ENCODE measurements at regions of chr2 and their contacts with region 1.

Region 1: DNA sequence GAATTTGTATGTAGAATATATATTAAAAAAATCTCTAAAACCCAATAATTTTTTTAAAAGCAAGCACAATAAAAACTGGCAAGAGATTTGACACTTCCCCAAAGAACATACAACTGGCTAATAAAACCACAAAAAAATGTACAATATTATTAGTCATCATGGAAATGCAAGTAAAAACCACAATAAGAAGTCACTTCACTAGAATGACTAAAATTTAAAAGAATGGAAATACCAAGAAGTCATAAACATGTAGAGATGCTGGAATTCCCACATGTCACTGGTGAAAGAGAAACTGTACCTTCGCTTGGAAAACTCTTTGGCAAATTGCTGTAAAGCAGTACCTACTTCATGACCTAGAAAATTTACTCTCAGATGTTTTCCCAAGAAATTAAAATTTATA is 43.4 kb upstream of the KYNU start:
- H3K4me3 Mint-ChIP-seq: peak overlapping the region; percentile 4
- H3K27ac Mint-ChIP-seq: peak overlapping the region; percentile 37
- H3K4me1 Mint-ChIP-seq: peaks cover 10% of the 10 kb centered on the region
- H3K27me3 Mint-ChIP-seq: no peaks in the 10 kb centered on the region

Region 2: DNA sequence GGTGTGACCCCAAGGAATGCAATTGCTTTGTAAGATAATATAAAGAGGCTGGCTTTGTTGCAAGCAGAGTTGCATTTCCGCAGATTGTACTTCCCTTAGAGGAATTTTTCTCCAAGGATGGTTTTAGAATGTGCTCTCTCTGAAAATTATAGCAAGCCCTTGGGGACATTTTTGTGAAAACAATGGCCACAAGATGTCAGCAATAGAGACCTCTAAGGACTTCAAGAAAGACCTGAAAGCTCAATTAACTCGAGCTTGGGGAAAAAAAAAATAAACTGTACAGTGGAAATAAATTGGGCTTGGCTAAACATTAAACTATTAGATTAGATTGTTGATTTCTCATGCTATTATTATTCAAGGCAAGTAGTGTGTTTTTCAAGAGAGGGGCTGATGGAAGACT is 37.9 kb before region 1 on chr2:
- intact Hi-C with region 1: loop called (anchors 2 kb)
- H3K4me3 Mint-ChIP-seq: no peak overlapping the region
- H3K27ac Mint-ChIP-seq: no peak overlapping the region
- H3K4me1 Mint-ChIP-seq: peaks cover 14% of the 10 kb centered on the region
- H3K27me3 Mint-ChIP-seq: no peaks in the 10 kb centered on the region